ENCODE measurements at regions of chr6 and their contacts with region 1.

Region 1: GRCh38 chr6:2448820-2449571 is 203.6 kb upstream of the GMDS start:
- DNase-seq: peak; percentile 40
- H3K4me3 ChIP-seq: peak overlapping the region; percentile 51
- CTCF ChIP-seq: peak; percentile 81

Region 2: DNA sequence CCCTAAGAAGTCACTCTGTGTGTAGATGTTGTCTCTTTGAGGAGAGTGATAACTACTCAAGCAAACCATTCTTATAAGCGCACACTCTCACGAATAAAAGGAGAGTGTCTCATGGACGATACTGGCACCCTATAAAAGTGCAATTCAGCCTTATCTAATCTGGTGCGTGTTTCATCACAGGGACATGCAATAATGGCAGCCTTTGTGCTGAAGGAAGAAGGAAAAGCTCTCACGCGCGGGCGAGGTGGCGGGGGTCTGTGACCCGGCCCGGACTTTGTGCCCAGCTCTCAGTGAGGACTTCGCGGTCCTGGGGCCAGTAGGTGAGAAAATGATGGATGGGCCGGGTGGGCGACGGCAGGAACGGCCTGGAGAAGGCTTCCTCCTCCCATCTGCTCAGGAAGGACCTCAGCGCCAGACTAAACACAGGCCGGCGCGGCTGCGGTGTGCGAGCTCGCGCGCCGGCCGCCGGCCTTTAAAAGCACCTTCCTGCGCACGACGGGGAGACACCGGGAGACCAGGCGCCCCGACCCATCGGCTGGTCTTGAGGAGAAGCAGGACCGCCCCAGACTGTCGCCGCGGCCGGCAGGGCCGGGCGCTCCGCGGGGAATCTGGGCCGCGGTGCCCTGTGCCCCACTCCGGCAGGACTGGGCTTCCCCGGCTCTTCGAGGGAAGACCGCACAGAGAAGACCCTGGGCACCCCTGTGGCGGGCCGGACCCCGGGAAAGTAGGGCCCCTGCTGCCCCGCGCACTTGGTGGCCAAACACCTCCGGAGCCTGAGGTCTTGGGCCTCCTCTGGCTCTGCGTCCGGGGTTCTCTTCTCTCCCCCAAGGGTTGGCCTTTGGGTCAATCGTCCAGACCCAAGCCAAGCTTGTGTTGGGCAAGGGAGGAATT is 847.6 kb before region 1 on chr6:
- CTCF ChIA-PET with region 1: interaction called, 37 read pairs
- POLR2A ChIA-PET with region 1: no interaction called
- DNase-seq: no peak
- H3K4me3 ChIP-seq: no peak overlapping the region
- CTCF ChIP-seq: no peak

Region 3: DNA sequence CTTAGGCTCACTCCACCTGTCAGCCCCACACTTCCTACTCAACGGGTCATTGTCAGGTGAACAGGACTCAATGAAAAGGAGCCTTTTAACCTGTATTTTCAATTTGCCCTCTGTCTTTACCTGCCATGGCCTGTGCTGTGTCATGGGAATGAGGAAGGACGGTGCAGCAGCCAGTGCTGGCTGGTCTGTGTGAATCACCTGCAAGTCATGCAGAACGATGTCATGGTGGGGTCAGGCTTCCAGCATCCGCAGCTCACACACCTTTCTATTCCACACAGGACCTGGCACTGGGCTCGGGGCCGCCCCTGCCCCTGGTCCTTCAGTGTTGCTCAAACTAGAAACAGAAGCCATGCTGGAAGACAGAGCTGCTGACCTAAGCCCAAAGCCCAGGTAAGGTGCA is 14.9 kb before region 1 on chr6:
- CTCF ChIA-PET with region 1: interaction called, 46 read pairs
- POLR2A ChIA-PET with region 1: interaction called, 3 read pairs
- DNase-seq: no peak
- H3K4me3 ChIP-seq: no peak overlapping the region
- CTCF ChIP-seq: no peak

Region 4: GRCh38 chr6:2460216-2460745 is 11.3 kb after region 1 on chr6:
- CTCF ChIA-PET with region 1: interaction called, 12 read pairs
- POLR2A ChIA-PET with region 1: no interaction called
- DNase-seq: no peak
- H3K4me3 ChIP-seq: no peak overlapping the region
- CTCF ChIP-seq: no peak